ENCODE measurements at regions of chr3 and their contacts with region 1.

Region 1: GRCh38 chr3:170357176-170357919 is at the start of gene SKIL:
- DNase-seq: peak; percentile 93 to 98 (median 96)
- ATAC-seq: peak; percentile 84
- H3K4me3 ChIP-seq: peak within 1 kb of the TSS; percentile 63
- H3K4me3 Mint-ChIP-seq: peak within 1 kb of the TSS; percentile 80 to 96 (median 94)
- H3K27ac ChIP-seq: peak within 1 kb of the TSS; percentile 99
- H3K27ac Mint-ChIP-seq: peak within 1 kb of the TSS; percentile 91 to 99 (median 97)
- H3K4me1 ChIP-seq: peaks cover 7 to 13% of the 10 kb centered on the region in 2 donors
- H3K4me1 Mint-ChIP-seq: peaks cover 28 to 68% (median 60%) of the 10 kb centered on the region in 7 donors
- H3K27me3 ChIP-seq: no peaks in the 10 kb centered on the region
- H3K27me3 Mint-ChIP-seq: peaks cover 0 to 26% (median 0%) of the 10 kb centered on the region in 5 donors
- total RNA-seq, gene SKIL: 19.1 to 80.5 (median 40.9) TPM

Region 2: DNA sequence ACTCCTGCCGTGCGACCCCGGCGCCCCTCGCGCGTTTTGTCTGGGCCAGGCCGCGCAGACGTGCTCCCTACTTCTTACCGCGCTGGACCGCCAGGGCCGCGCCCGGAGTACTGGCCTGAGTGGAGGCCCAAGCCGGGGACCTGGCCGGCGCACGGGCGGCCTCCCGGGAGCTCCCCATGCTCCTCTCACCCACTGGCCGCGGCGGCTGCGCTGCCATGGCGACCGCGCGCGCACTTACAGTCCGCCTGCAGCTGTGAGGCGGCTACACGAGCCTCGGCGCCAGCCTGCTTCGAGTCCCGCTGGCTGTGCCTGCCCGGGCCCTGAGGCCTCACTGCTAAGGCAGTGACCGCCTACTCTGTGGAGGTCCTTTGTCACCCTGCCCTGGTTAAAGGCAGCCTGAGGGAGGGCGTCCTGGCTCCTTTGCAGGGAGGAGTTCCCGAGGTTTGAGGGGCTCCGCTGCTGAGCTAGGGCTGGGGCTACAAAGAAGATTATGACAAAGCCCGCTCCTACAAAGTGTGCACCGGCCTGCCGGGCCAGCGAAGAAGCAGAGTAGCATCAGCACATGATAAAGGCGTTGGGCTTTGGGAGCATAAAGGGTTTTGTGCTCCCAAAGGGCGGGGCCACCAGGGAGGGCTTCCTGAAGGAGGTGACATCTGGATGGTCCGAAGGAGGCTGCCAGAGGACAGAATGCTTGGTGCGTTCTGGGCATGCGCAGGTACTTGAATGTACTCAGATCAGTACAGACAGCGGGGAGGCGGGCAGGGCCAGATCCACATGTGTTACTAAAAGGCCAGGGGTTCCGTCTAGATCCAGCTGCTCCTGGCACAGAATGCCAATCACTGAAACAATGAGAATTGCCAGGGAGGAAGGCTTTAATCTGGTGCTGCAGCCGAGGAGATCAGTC is 544.8 kb before region 1 on chr3 and contains the starts of genes LRRC34 and LRRIQ4:
- CTCF ChIA-PET with region 1: no interaction called
- POLR2A ChIA-PET with region 1: no interaction called
- intact Hi-C with region 1: loop called in 1 of 2 experiments (anchors 5 kb)
- DNase-seq: peak; percentile 43 to 72 (median 52)
- ATAC-seq: peak; percentile 72
- H3K4me3 ChIP-seq: peak within 1 kb of the TSS; percentile 85
- H3K4me3 Mint-ChIP-seq: peak within 1 kb of the TSS; percentile 79 to 91 (median 86)
- H3K27ac ChIP-seq: peak within 1 kb of the TSS; percentile 59
- H3K27ac Mint-ChIP-seq: peak within 1 kb of the TSS; percentile 3 to 92 (median 71)
- H3K4me1 ChIP-seq: peaks cover 4 to 6% of the 10 kb centered on the region in 2 donors
- H3K4me1 Mint-ChIP-seq: peaks cover 21 to 40% (median 25%) of the 10 kb centered on the region in 7 donors
- H3K27me3 ChIP-seq: no peaks in the 10 kb centered on the region
- H3K27me3 Mint-ChIP-seq: peaks cover 0 to 18% (median 2%) of the 10 kb centered on the region in 5 donors
- total RNA-seq, gene LRRC34: 0.30 to 3.7 (median 0.42) TPM
- total RNA-seq, gene LRRIQ4: 0.12 TPM in 1 of 5 experiments, not detected in the others

Region 3: DNA sequence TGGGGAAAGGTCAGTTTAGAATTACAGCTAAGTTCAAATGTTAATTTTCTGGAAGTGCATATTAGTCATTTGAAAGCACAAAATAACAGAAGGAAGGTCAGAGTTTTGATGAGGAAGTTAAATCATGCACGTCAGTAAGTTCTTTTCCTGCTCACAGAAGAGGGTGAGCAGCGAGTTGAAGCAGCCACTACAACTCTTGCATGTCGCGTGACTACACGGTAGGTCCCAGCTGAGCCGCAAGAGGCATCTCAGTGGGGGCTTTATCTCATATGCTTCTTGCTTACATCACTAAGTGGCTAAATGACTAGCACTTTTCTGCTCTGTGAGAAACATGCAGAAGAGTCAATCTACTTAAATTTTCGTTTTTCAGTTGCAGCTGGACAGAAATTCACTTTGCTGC is 412.0 kb before region 1 on chr3:
- CTCF ChIA-PET with region 1: no interaction called
- POLR2A ChIA-PET with region 1: no interaction called
- intact Hi-C with region 1: no loop called
- DNase-seq: peak in 7 of 9 donors; percentile 11 to 34 (median 27)
- ATAC-seq: peak; percentile 96
- H3K4me3 ChIP-seq: no peak overlapping the region
- H3K4me3 Mint-ChIP-seq: peak overlapping the region in 9 of 10 donors; percentile 17 to 71 (median 49)
- H3K27ac ChIP-seq: no peak overlapping the region
- H3K27ac Mint-ChIP-seq: peak overlapping the region in 8 of 9 donors; percentile 2 to 78 (median 25)
- H3K4me1 ChIP-seq: no peaks in the 10 kb centered on the region
- H3K4me1 Mint-ChIP-seq: peaks cover 10 to 23% (median 15%) of the 10 kb centered on the region in 7 donors
- H3K27me3 ChIP-seq: no peaks in the 10 kb centered on the region
- H3K27me3 Mint-ChIP-seq: peaks cover 0 to 7% (median 0%) of the 10 kb centered on the region in 5 donors

Region 4: DNA sequence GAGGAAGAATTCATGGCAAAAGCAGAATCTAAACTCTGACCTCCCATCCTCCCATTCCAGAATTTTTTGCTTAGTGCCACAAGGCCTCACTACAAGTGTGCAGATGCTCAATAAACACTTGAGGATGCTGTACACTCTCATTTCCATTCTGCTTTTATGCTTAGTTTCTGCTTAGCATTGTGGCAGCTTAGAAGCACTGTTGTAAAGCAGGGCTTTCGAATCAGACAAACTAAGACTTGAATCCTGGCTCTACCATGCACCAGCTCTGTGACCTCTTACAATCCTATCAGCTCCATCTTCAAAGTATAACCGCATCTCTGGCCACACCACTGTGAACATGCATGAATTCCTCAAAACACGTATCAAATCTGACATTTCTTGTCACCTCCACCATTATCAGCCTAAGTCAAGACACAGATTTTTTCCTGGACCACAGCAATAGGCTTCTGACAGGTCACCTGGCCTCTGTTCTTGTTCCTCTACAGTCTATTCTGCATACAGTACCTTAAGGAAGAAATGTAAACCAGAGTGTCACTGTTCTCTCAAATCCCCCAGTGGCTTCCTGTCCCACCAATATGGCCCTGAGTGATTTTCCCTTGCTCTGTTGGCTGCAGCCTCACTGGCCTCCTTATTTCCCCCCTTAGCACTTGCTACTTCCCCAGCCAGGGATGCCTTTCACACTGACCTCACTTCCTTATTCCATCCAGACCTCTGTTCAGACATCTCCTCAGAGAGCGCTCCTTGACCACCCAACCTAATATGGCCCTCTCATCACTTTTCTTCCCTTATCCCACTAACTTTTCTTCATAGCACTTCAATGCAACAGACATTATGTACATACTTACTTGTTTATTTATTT is 167.7 kb before region 1 on chr3:
- CTCF ChIA-PET with region 1: interaction called, 3 read pairs
- POLR2A ChIA-PET with region 1: interaction called, 4 read pairs
- intact Hi-C with region 1: loop called (anchors 2 kb)
- DNase-seq: no peak
- ATAC-seq: peak; percentile 28
- H3K4me3 ChIP-seq: no peak overlapping the region
- H3K4me3 Mint-ChIP-seq: peak overlapping the region in 5 of 10 donors; percentile 10 to 37 (median 23)
- H3K27ac ChIP-seq: no peak overlapping the region
- H3K27ac Mint-ChIP-seq: peak overlapping the region in 2 of 9 donors; percentile 14 to 51
- H3K4me1 ChIP-seq: peaks cover 0 to 4% of the 10 kb centered on the region in 2 donors
- H3K4me1 Mint-ChIP-seq: peaks cover 0 to 14% (median 12%) of the 10 kb centered on the region in 7 donors
- H3K27me3 ChIP-seq: no peaks in the 10 kb centered on the region
- H3K27me3 Mint-ChIP-seq: peaks cover 0 to 21% (median 4%) of the 10 kb centered on the region in 5 donors

Region 5: GRCh38 chr3:170307671-170308403 is 49.5 kb before region 1 on chr3:
- CTCF ChIA-PET with region 1: no interaction called
- POLR2A ChIA-PET with region 1: no interaction called
- intact Hi-C with region 1: loop called (anchors 1 to 5 kb)
- DNase-seq: no peak
- ATAC-seq: no peak
- H3K4me3 ChIP-seq: no peak overlapping the region
- H3K4me3 Mint-ChIP-seq: no peak overlapping the region
- H3K27ac ChIP-seq: no peak overlapping the region
- H3K27ac Mint-ChIP-seq: no peak overlapping the region
- H3K4me1 ChIP-seq: no peaks in the 10 kb centered on the region
- H3K4me1 Mint-ChIP-seq: peaks cover 0 to 2% (median 0%) of the 10 kb centered on the region in 7 donors
- H3K27me3 ChIP-seq: no peaks in the 10 kb centered on the region
- H3K27me3 Mint-ChIP-seq: no peaks in the 10 kb centered on the region

Region 6: GRCh38 chr3:170869645-170870593 is 512.6 kb after region 1 on chr3 and contains the start of gene RPL22L1:
- CTCF ChIA-PET with region 1: no interaction called
- POLR2A ChIA-PET with region 1: no interaction called
- intact Hi-C with region 1: loop called in 1 of 2 experiments (anchors 1 kb)
- DNase-seq: peak; percentile 83 to 92 (median 90)
- ATAC-seq: peak; percentile 96
- H3K4me3 ChIP-seq: peak within 1 kb of the TSS; percentile 84
- H3K4me3 Mint-ChIP-seq: peak within 1 kb of the TSS; percentile 93 to 98 (median 94)
- H3K27ac ChIP-seq: peak within 1 kb of the TSS; percentile 86
- H3K27ac Mint-ChIP-seq: peak within 1 kb of the TSS; percentile 96 to 99 (median 98)
- H3K4me1 ChIP-seq: peaks cover 22% of the 10 kb centered on the region in 2 donors
- H3K4me1 Mint-ChIP-seq: peaks cover 10 to 41% (median 26%) of the 10 kb centered on the region in 7 donors
- H3K27me3 ChIP-seq: no peaks in the 10 kb centered on the region
- H3K27me3 Mint-ChIP-seq: peaks cover 0 to 4% (median 0%) of the 10 kb centered on the region in 5 donors
- total RNA-seq, gene RPL22L1: 27.5 to 62.6 (median 47.9) TPM

Region 7: GRCh38 chr3:171028025-171028778 is 670.9 kb after region 1 on chr3:
- CTCF ChIA-PET with region 1: no interaction called
- POLR2A ChIA-PET with region 1: no interaction called
- intact Hi-C with region 1: no loop called
- DNase-seq: peak in 6 of 9 donors; percentile 10 to 49 (median 24)
- ATAC-seq: peak; percentile 54
- H3K4me3 ChIP-seq: peak overlapping the region; percentile 25
- H3K4me3 Mint-ChIP-seq: no peak overlapping the region
- H3K27ac ChIP-seq: no peak overlapping the region
- H3K27ac Mint-ChIP-seq: no peak overlapping the region
- H3K4me1 ChIP-seq: no peaks in the 10 kb centered on the region
- H3K4me1 Mint-ChIP-seq: peaks cover 0 to 6% (median 0%) of the 10 kb centered on the region in 7 donors
- H3K27me3 ChIP-seq: peaks cover 0 to 4% of the 10 kb centered on the region in 2 donors
- H3K27me3 Mint-ChIP-seq: peaks cover 0 to 29% (median 16%) of the 10 kb centered on the region in 5 donors

Region 8: DNA sequence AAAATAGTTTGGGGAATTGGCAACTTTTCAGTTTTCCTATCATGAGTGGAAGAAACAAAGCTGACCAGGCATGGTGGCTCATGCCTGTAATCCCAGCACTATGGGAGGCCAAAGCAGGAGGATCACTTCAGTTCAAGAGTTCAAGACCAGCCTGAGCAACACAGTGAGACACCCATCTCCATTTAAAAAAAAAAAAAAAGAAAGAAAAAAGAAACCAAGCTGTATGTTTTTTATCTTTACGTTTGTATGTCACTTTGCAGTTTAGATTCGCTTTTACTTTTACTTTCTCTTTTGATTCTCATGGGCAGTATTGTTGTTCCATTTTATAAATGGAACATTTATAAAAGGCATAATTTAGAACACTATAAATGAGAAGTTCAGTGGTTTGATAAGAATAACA is 1134.0 kb after region 1 on chr3:
- CTCF ChIA-PET with region 1: no interaction called
- POLR2A ChIA-PET with region 1: no interaction called
- intact Hi-C with region 1: no loop called
- DNase-seq: peak in 6 of 9 donors; percentile 14 to 57 (median 36)
- ATAC-seq: peak; percentile 26
- H3K4me3 ChIP-seq: peak overlapping the region; percentile 10
- H3K4me3 Mint-ChIP-seq: peak overlapping the region; percentile 36 to 82 (median 74)
- H3K27ac ChIP-seq: no peak overlapping the region
- H3K27ac Mint-ChIP-seq: peak overlapping the region; percentile 79 to 90 (median 85)
- H3K4me1 ChIP-seq: peaks cover 32 to 38% of the 10 kb centered on the region in 2 donors
- H3K4me1 Mint-ChIP-seq: peaks cover 15 to 55% (median 48%) of the 10 kb centered on the region in 7 donors
- H3K27me3 ChIP-seq: no peaks in the 10 kb centered on the region
- H3K27me3 Mint-ChIP-seq: no peaks in the 10 kb centered on the region

Measured in naive thymus-derived CD4-positive, alpha-beta T cell (primary cell).